ENCODE measurements at regions of chr3 and their contacts with region 1.

Region 1: DNA sequence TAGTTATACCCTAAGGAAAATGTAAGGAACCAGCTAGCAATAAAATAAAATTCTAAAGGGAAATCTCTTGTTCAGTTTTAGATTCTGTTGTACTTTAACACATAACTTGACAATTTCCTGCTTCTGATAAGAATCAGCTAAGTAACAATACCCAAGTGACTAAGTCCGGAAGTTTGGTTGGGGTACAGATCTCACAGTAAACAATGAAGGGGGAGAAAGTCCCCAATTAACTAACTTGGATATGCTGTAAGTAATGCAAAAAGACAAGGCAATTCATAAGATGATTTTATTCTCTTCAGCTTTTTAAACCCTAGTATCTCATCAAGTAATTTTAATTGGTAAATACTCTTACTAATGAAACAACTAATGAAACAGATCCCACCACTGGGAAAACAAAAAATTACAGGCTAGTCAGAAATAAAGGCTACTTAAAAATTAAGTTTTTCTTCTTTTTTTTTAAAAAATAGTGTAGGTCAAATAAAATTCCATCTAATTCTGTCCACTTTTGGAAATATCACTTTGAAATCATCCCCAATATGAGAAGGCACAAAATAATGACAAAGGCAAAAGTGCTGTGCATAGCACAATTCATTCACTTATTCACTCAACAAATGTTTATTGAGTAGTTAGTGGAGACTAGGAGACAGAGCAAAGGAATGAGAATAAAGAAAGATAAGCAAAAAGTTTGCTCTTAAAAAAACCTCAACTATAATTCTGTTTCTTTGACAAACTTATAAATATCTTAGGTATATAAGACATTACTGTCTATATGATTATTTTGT is 37.8 kb upstream of the IL20RB start:
- DNase-seq: no peak
- H3K4me3 ChIP-seq: peak overlapping the region in 1 of 8 donors; percentile 0
- H3K27ac ChIP-seq: peak overlapping the region; percentile 1 to 82 (median 61)
- H3K4me1 ChIP-seq: peaks cover 18 to 94% (median 45%) of the 10 kb centered on the region in 6 donors
- H3K27me3 ChIP-seq: no peaks in the 10 kb centered on the region
- CTCF ChIP-seq: no peak
- POLR2A ChIP-seq: no peak

Region 2: DNA sequence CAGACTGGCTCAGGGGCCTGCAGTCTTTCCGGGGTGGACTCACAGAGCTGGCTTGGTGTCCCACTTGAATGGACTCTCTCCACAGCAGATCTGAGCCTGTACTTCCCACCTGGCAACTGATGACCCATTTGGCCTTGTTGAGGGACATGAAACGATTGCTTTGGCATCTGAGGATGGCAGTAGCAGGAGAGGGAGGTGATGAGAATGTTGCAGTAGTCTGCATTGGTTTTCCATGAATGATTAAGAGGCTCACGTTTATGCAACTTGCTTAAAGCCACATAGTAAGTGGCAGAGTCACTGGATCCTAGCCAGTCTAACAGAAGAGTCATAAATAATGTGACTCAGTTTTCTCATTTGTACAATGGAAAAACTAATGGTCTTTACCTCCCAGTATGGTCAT is 59.7 kb after region 1 on chr3:
- intact Hi-C with region 1: loop called (anchors 10 kb)
- DNase-seq: no peak
- H3K4me3 ChIP-seq: no peak overlapping the region
- H3K27ac ChIP-seq: no peak overlapping the region
- H3K4me1 ChIP-seq: no peaks in the 10 kb centered on the region
- H3K27me3 ChIP-seq: no peaks in the 10 kb centered on the region
- CTCF ChIP-seq: no peak
- POLR2A ChIP-seq: no peak

Measured in spleen (tissue), 13 donors.